Activated CD4-positive, alpha-beta memory T cell treated with anti-CD3 and anti-CD28 coated beads, Interleukin-2, amount 10 ng/mL, durations not matched to agents 7 days and 5 days (primary cell): ENCODE measurements at regions of chr19 and their contacts with region 1.

Region 1: DNA sequence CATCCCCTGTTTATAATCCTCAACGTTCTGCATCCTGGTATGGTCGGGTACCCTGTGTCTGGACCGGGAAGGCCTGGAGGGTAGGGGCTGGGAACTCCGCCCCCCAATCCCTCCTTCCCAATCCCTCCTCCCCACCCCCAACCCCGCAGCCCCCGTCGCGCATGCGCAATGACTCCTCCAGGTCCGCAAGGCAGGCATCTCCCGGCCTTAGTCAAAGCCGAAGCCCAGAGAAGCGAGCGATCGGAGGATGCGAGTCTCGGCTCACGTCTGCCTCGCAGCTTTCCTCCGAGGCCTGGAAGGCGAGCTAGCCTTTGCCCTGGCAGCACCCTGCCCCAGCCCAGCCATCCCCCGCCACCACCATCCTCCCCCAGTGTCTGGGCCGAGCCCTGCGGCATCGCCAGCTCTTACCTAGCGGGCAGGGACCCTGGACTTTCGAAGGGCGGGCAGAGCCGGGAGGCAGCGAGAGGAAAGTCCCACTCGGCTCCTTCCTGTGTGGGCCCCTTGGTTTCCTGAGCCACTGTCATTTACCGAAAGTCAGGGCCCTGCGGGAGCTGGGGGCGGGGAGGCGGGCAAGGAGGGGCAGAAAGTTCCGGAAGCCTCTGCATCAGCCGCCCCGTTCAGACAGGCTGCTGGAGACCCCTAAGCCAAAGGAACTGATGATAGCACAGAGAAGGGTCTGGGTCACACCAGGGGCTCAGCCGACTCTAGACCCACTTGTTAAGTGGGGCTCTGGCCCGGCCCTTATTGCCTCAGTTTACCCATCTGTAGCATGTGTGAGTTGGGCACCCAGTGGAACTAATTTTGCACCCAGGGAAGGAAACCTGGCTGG is at the start of gene JAK3:
- DNase-seq: peak; percentile 91
- H3K4me3 Mint-ChIP-seq: peak within 1 kb of the TSS; percentile 94
- H3K27ac Mint-ChIP-seq: peak within 1 kb of the TSS; percentile 93
- H3K4me1 Mint-ChIP-seq: peaks cover 72% of the 10 kb centered on the region
- H3K27me3 Mint-ChIP-seq: no peaks in the 10 kb centered on the region
- total RNA-seq, gene JAK3: 233 to 237 TPM

Region 2: GRCh38 chr19:17718947-17719711 is 128.6 kb before region 1 on chr19 and contains the start of gene MAP1S:
- CTCF ChIA-PET with region 1: interaction called, 3 read pairs
- POLR2A ChIA-PET with region 1: interaction called, 10 read pairs
- DNase-seq: peak; percentile 73
- H3K4me3 Mint-ChIP-seq: peak within 1 kb of the TSS; percentile 84
- H3K27ac Mint-ChIP-seq: peak within 1 kb of the TSS; percentile 75
- H3K4me1 Mint-ChIP-seq: peaks cover 38% of the 10 kb centered on the region
- H3K27me3 Mint-ChIP-seq: no peaks in the 10 kb centered on the region
- total RNA-seq, gene MAP1S: 66.2 to 76.2 TPM

Region 3: DNA sequence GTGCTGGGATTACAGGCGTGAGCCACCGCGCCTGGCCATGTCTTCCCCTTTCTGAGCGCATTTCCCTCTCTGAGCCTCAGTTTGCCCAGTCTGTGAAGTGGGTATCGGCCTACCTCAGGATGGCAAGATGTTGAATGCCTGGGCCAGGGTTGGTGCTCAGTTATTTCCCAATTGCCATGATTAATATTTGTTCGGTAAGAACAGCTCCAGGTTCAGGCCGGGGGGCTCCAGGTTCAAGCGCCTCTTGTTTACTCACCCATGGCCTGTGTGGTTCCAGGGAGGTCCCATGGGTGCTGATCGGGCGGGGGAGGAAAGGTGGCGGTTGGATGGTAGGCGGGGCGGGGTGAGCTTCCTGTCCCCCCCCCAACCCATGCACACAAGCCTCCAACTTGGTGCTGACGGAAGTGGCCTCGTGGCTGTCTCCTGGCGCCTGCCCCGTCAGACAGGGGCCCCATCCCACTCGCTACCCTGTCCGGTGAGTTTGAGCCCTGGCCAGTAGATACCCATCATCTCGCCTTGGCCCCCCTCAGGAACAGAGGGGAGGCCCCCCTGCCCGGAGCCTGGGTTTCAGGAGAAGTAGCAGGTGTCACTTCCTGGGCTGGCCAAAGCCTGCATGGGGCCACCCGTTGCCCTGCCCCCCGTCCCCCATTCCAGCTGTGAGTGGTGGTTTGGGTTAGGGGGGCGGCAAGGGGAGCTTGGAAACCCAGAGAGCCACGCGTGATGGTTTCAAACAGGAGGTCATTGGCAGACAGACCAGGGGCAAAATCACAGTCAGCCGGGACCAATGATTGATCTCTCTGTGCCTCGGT is 96.4 kb before region 1 on chr19 and contains the start of gene FCHO1:
- CTCF ChIA-PET with region 1: no interaction called
- POLR2A ChIA-PET with region 1: interaction called, 19 read pairs
- DNase-seq: peak; percentile 93
- H3K4me3 Mint-ChIP-seq: peak within 1 kb of the TSS; percentile 86
- H3K27ac Mint-ChIP-seq: peak within 1 kb of the TSS; percentile 83
- H3K4me1 Mint-ChIP-seq: peaks cover 65% of the 10 kb centered on the region
- H3K27me3 Mint-ChIP-seq: no peaks in the 10 kb centered on the region
- total RNA-seq, gene FCHO1: 64.8 to 76.7 TPM

Region 4: GRCh38 chr19:17803264-17803922 is 44.4 kb before region 1 on chr19:
- CTCF ChIA-PET with region 1: interaction called, 16 read pairs
- POLR2A ChIA-PET with region 1: interaction called, 32 read pairs
- DNase-seq: peak; percentile 78
- H3K4me3 Mint-ChIP-seq: peak overlapping the region; percentile 49
- H3K27ac Mint-ChIP-seq: peak overlapping the region; percentile 97
- H3K4me1 Mint-ChIP-seq: peaks cover 49% of the 10 kb centered on the region
- H3K27me3 Mint-ChIP-seq: peaks cover 8% of the 10 kb centered on the region

Region 5: DNA sequence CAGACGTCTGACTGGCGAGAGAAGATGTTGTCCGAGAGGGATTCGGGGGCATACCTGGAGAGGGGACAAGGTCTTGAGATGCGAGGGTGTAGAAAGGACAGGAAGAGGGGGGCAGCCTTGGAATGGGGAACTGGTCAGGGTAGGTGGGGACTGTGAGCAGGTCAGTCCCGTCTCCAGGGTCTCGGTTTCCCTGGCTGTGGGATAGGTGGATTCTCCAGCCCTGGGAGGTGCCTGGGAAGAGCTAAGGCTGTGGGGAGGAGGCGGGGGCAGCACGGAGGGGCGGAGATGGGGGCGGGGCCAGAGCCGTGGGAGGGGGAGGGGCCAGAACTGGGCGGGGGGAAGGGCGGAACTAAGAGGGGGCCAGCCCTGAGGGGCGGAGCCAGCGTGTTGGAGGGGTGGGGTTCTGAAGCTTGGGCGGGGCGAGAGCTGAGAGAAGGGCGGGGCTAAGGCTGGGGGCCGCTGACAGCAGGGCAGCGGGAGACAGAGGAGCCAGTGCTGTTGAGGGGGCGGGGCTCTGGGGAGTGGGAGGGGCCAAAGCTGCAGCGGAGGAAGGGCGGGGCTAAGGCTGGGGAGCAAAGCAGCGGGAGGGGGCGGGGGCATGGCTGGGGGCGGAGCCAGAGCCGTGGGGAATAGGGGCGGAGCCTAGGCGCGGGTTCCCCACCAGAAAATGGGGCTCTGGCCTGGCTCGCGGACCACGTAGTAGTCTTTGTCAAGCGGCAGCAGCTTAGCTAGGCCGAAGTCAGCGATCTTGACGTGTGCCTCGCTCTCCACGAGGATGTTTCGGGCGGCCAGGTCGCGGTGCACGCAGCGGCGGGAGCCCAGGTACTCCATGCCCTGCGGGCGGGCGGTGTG is 17.0 kb before region 1 on chr19:
- CTCF ChIA-PET with region 1: interaction called, 3 read pairs
- POLR2A ChIA-PET with region 1: interaction called, 42 read pairs
- DNase-seq: peak; percentile 54
- H3K4me3 Mint-ChIP-seq: no peak overlapping the region
- H3K27ac Mint-ChIP-seq: no peak overlapping the region
- H3K4me1 Mint-ChIP-seq: peaks cover 22% of the 10 kb centered on the region
- H3K27me3 Mint-ChIP-seq: no peaks in the 10 kb centered on the region

Region 6: GRCh38 chr19:18021121-18021755 is 173.5 kb after region 1 on chr19:
- CTCF ChIA-PET with region 1: no interaction called
- POLR2A ChIA-PET with region 1: no interaction called
- DNase-seq: peak; percentile 58
- H3K4me3 Mint-ChIP-seq: peak overlapping the region; percentile 79
- H3K27ac Mint-ChIP-seq: peak overlapping the region; percentile 81
- H3K4me1 Mint-ChIP-seq: peaks cover 50% of the 10 kb centered on the region
- H3K27me3 Mint-ChIP-seq: no peaks in the 10 kb centered on the region